ENCODE measurements at regions of chr2 and their contacts with region 1.

Region 1: DNA sequence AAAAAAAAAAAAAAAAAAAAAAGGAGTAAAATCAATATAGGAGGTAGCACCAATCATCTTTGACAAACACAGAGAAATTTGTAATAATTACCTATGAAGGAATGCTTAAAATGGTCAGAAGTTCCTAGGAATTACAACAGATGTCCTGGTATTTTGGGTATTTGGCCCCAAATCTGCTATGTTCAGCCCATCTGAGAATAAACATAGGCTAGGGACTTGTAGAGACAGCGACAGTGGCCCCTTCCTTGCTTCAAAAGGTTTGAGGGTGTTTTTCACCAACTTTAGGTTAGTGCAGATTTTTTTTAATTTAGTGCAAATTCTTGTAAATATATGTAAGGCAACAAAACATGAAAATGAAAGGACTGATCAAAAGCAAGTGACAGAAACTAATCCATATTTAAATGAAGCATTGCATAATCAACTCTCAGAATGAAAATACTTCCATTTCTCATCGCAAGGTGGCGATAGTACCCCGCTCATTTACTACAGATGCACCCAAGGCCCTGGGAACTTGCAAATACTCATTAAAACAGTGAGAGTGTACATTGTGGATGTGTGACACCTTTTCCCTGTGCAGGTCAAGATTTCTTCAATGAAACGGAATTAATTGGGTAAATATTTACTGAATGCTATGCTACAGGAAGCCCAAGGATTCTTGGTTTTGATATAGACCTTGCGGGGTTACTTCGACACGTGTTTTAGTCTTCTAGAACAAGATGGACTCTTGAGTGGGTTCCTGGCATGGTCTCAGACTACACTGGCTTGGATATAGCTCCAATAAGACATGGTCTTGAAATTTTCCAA is 44.6 kb downstream of the FAM124B start:
- DNase-seq: peak in 2 of 6 donors; percentile 27 to 63
- ATAC-seq: peak; percentile 86 to 95 (median 94)
- H3K4me3 ChIP-seq: no peak overlapping the region
- H3K27ac ChIP-seq: no peak overlapping the region
- H3K4me1 ChIP-seq: no peaks in the 10 kb centered on the region
- H3K27me3 ChIP-seq: no peaks in the 10 kb centered on the region
- CTCF ChIP-seq: peak; percentile 54 to 73 (median 60)

Region 2: GRCh38 chr2:223457301-223457700 is 900.0 kb before region 1 on chr2:
- intact Hi-C with region 1: no loop called
- DNase-seq: no peak
- ATAC-seq: no peak
- H3K4me3 ChIP-seq: no peak overlapping the region
- H3K27ac ChIP-seq: no peak overlapping the region
- H3K4me1 ChIP-seq: no peaks in the 10 kb centered on the region
- H3K27me3 ChIP-seq: no peaks in the 10 kb centered on the region
- CTCF ChIP-seq: no peak

Region 3: GRCh38 chr2:224650815-224651439 is 293.6 kb after region 1 on chr2:
- intact Hi-C with region 1: loop called in 2 of 3 experiments (anchors 5 kb)
- DNase-seq: peak in 1 of 6 donors; percentile 8
- ATAC-seq: peak; percentile 66 to 86 (median 82)
- H3K4me3 ChIP-seq: no peak overlapping the region
- H3K27ac ChIP-seq: no peak overlapping the region
- H3K4me1 ChIP-seq: no peaks in the 10 kb centered on the region
- H3K27me3 ChIP-seq: peaks cover 0 to 6% (median 0%) of the 10 kb centered on the region in 4 donors
- CTCF ChIP-seq: peak; percentile 60 to 80 (median 74)

Measured in pancreas (tissue), 10 donors.